Activated CD4-positive, alpha-beta T cell treated with anti-CD3 and anti-CD28 coated beads, Interleukin-2, amount 10 ng/mL, durations not matched to agents 24 days and 14 days (primary cell): ENCODE measurements at regions of chr1 and their contacts with region 1.

Region 1: DNA sequence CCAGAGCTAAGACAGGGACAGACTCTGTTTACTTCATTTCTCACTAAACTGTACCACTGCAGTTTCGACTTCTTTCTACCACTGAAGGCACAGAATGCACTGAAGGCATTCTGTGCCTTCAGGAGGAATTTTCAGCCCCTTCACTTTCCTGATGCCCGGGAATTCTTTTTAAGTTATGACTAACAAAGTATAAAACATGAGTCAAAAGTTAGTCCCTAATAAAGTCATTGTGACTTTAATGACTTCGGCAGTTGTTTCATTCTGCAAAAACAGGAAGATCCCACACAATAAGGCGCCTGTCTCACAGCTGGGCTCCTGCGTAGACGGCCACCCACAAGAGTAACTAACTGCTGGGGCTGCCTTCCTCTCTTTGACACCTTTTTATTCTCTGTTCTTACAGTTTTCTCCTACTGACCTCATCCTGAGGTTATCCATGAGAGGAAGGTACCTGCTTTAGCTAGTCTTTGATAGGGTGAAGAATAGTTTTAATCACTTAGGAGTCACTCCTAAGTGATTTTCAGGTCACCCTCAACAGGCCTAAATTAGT is 183.9 kb upstream of the SGIP1 start:
- DNase-seq: peak; percentile 82
- H3K4me3 Mint-ChIP-seq: peak overlapping the region; percentile 80
- H3K27ac Mint-ChIP-seq: peak overlapping the region; percentile 90
- H3K4me1 Mint-ChIP-seq: peaks cover 72% of the 10 kb centered on the region
- H3K27me3 Mint-ChIP-seq: no peaks in the 10 kb centered on the region

Region 2: DNA sequence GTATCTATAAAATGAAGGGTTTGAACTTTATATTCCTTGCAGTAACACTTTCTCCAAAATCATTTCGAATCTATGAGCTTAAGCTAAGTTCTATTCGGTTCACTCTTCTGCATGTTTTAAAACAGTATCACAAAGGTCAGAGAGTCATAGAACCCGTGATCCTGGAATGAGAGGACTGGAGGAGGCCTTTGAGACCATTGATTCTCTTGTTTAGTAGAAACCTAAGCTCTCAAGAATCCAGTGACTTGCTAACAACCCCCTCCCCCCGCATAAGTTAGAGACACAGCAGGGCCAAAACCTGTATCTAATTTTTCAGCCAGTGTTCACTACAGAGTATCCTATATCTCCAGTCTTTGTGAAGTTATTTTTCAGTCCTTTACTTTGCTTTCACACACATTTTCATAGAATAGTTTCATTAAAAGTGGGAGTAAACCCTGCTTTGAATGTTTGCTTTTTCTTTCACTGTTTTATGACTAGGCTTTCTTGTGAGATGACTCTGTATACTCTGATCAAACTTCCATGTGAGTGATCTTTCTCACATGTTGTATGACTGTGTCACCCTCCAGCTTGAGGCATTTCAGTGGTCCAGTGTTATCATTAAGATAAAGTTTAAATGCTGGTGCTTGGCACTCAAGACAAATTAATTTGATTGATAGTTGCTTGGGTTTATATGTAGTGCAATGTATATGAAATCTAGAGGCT is 91.5 kb before region 1 on chr1:
- intact Hi-C with region 1: loop called (anchors 1 kb)
- DNase-seq: no peak
- H3K4me3 Mint-ChIP-seq: no peak overlapping the region
- H3K27ac Mint-ChIP-seq: peak overlapping the region; percentile 59
- H3K4me1 Mint-ChIP-seq: peaks cover 57% of the 10 kb centered on the region
- H3K27me3 Mint-ChIP-seq: no peaks in the 10 kb centered on the region

Region 3: DNA sequence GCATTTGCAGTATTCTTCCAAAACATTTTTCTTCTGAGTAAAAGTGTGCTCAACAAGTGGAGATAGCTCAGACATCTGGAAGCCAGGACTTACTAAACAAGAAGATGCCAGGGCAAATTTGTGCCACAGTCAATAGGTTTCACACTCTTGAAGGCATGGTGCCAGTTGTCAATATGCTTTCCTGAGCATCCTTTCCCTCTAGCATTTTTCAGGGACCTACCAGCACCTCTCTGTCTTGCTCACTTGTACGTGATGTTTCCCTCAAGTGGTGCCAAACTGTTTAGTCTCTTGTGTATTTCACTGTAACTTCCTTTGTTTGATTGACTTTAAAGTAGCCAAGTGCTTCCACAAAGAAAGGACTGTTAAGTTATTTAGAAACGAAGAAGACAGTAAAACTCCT is 10.1 kb before region 1 on chr1:
- intact Hi-C with region 1: loop called (anchors 1 kb)
- DNase-seq: peak; percentile 72
- H3K4me3 Mint-ChIP-seq: peak overlapping the region; percentile 74
- H3K27ac Mint-ChIP-seq: peak overlapping the region; percentile 81
- H3K4me1 Mint-ChIP-seq: peaks cover 58% of the 10 kb centered on the region
- H3K27me3 Mint-ChIP-seq: no peaks in the 10 kb centered on the region

Region 4: GRCh38 chr1:66360285-66360724 is 10.2 kb after region 1 on chr1:
- intact Hi-C with region 1: loop called (anchors 1 kb)
- DNase-seq: no peak
- H3K4me3 Mint-ChIP-seq: no peak overlapping the region
- H3K27ac Mint-ChIP-seq: no peak overlapping the region
- H3K4me1 Mint-ChIP-seq: peaks cover 53% of the 10 kb centered on the region
- H3K27me3 Mint-ChIP-seq: no peaks in the 10 kb centered on the region

Region 5: GRCh38 chr1:66399888-66400529 is 49.9 kb after region 1 on chr1:
- intact Hi-C with region 1: loop called (anchors 2 kb)
- DNase-seq: no peak
- H3K4me3 Mint-ChIP-seq: peak overlapping the region; percentile 72
- H3K27ac Mint-ChIP-seq: peak overlapping the region; percentile 90
- H3K4me1 Mint-ChIP-seq: peaks cover 43% of the 10 kb centered on the region
- H3K27me3 Mint-ChIP-seq: no peaks in the 10 kb centered on the region

Region 6: DNA sequence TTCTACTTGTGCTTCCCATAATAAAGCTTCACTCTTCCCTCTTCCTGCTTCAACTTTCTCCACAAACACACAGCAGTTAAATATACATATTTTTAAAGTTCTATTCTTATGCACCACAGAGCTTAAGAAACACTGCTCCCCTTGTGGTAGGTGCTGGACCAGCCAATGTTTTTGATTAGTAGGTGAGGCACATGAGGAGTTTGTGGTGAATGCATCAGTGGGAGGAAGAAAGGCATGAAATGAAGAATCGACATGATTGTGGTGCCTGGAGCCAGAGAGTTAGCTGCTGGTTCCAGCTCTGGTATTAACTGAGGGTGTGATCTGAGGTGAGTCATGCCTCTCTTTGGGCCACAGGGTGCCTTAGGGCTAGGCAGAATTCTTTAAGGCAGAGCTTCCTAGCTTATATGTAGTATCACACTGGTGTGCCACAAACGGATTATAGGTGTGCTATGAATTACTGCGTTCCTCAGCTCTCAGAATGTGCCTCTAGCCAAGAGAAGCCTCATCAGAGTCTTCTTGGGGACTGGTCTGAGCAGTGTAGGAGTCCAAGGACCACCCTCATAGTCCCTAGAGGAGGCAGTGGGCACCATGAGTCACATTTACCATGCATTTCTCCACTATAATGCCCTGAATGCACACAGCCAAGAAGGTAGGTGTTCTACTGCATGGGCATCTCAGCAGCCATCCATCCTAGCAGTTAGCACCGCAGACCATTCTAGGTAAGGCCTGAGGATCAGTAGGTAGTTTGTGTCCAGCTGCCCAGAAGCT is 86.5 kb after region 1 on chr1:
- intact Hi-C with region 1: loop called (anchors 2 kb)
- DNase-seq: peak; percentile 80
- H3K4me3 Mint-ChIP-seq: no peak overlapping the region
- H3K27ac Mint-ChIP-seq: peak overlapping the region; percentile 7
- H3K4me1 Mint-ChIP-seq: peaks cover 33% of the 10 kb centered on the region
- H3K27me3 Mint-ChIP-seq: no peaks in the 10 kb centered on the region

Region 7: GRCh38 chr1:66575739-66576138 is 225.7 kb after region 1 on chr1:
- intact Hi-C with region 1: no loop called
- DNase-seq: no peak
- H3K4me3 Mint-ChIP-seq: no peak overlapping the region
- H3K27ac Mint-ChIP-seq: no peak overlapping the region
- H3K4me1 Mint-ChIP-seq: no peaks in the 10 kb centered on the region
- H3K27me3 Mint-ChIP-seq: peaks cover 24% of the 10 kb centered on the region